Heart left ventricle (tissue), 16 donors: ENCODE measurements at regions of chrX and their contacts with region 1.

Region 1: DNA sequence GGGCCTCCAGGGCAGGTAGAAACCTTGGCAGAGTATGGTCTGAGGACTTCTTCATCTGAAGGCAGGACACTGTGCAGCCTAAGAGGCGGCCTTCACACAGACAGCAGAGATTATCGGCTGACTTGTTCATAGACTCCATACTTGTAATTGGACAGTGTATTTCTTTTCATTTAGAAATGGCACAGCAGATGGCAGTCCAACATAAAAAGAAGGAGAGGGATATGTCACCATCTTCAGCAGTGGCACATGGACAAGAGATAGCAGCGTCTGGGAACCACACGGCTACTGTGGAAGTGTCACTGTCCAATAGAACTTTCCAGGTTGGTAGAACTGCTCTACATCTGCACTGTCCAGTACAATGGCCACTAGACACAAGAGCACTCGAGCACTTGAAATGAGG is 21.7 kb upstream of the GEMIN8 start:
- DNase-seq: no peak
- ATAC-seq: no peak
- H3K4me3 ChIP-seq: no peak overlapping the region
- H3K27ac ChIP-seq: no peak overlapping the region
- H3K4me1 ChIP-seq: no peaks in the 10 kb centered on the region
- H3K27me3 ChIP-seq: peaks cover 0 to 81% (median 0%) of the 10 kb centered on the region in 9 donors
- CTCF ChIP-seq: no peak
- POLR2A ChIP-seq: no peak

Region 2: DNA sequence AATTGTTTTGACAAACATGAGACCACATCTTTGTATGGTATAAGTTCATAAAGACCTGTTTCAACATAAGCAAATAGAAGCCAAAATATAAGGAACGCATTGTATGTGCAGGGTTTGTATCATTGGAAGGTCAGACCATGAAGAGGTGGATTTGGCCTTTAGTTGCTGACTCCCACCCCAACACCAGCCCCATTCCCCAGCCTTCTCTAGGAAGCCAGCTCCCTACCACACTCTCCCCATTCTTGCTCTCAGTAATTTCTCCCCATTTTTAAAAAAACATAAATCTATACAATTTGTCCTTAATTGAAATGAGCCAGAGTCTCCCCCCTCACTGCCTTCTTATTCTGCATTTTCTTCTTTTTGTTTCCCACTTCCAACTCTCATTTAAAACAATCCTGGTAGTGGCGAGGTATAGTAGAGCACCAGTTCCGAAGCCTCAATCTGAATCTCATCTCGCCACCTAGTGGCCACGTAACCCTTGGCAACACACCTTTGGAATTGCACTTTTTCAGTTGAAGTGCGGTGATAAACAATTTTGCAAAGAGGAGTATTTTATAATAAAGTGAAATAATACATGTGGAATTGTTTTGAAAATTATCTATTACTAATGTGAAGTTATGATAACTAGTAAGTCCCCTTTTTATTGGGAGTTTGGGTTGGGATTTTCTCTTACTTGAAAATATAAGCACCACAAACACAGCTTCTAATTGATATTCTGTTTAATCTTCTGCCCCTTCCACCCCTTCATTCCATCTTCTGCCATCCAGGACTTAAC is 1091.8 kb after region 1 on chrX:
- intact Hi-C with region 1: loop called in 3 of 10 experiments (anchors 5 to 10 kb)
- DNase-seq: peak in 4 of 5 donors; percentile 8 to 31 (median 24)
- ATAC-seq: peak in 1 of 4 donors; percentile 53
- H3K4me3 ChIP-seq: no peak overlapping the region
- H3K27ac ChIP-seq: no peak overlapping the region
- H3K4me1 ChIP-seq: no peaks in the 10 kb centered on the region
- H3K27me3 ChIP-seq: peaks cover 0 to 26% (median 0%) of the 10 kb centered on the region in 9 donors
- CTCF ChIP-seq: peak; percentile 48 to 71 (median 59)
- POLR2A ChIP-seq: no peak